Common myeloid progenitor, CD34-positive (primary cell): ENCODE measurements at regions of chr10 and their contacts with region 1.

Region 1: GRCh38 chr10:80131499-80131901 is 1.0 kb upstream of the PLAC9 start:
- DNase-seq: no peak
- H3K4me3 ChIP-seq: no peak overlapping the region
- H3K27ac ChIP-seq: no peak overlapping the region
- H3K4me1 ChIP-seq: peaks cover 0 to 10% (median 7%) of the 10 kb centered on the region in 4 experiments
- H3K27me3 ChIP-seq: peaks cover 3 to 34% (median 11%) of the 10 kb centered on the region in 5 experiments

Region 2: GRCh38 chr10:79976999-79977398 is 154.5 kb before region 1 on chr10:
- CTCF ChIA-PET with region 1: no interaction called
- POLR2A ChIA-PET with region 1: no interaction called
- DNase-seq: no peak
- H3K4me3 ChIP-seq: no peak overlapping the region
- H3K27ac ChIP-seq: no peak overlapping the region
- H3K4me1 ChIP-seq: peaks cover 0 to 10% (median 7%) of the 10 kb centered on the region in 4 experiments
- H3K27me3 ChIP-seq: peaks cover 5 to 25% (median 15%) of the 10 kb centered on the region in 5 experiments

Region 3: GRCh38 chr10:80144067-80144695 is 12.7 kb after region 1 on chr10:
- CTCF ChIA-PET with region 1: interaction called, 10 read pairs
- POLR2A ChIA-PET with region 1: interaction called, 3 read pairs
- DNase-seq: peak in 2 of 3 donors; percentile 24 to 39
- H3K4me3 ChIP-seq: peak overlapping the region in 6 of 7 experiments; percentile 25 to 71 (median 48)
- H3K27ac ChIP-seq: no peak overlapping the region
- H3K4me1 ChIP-seq: peaks cover 0 to 18% (median 15%) of the 10 kb centered on the region in 4 experiments
- H3K27me3 ChIP-seq: peaks cover 0 to 6% (median 3%) of the 10 kb centered on the region in 5 experiments